ENCODE measurements at regions of chr12 and their contacts with region 1.

Region 1: GRCh38 chr12:65169320-65170208 is at the start of gene LEMD3:
- DNase-seq: peak; percentile 88 to 98 (median 94)
- ATAC-seq: peak; percentile 90
- H3K4me3 ChIP-seq: peak within 1 kb of the TSS; percentile 74
- H3K4me3 Mint-ChIP-seq: peak within 1 kb of the TSS; percentile 99
- H3K27ac ChIP-seq: peak within 1 kb of the TSS; percentile 83 to 88
- H3K27ac Mint-ChIP-seq: peak within 1 kb of the TSS; percentile 99
- H3K4me1 ChIP-seq: peaks cover 24% of the 10 kb centered on the region
- H3K4me1 Mint-ChIP-seq: peaks cover 24% of the 10 kb centered on the region
- H3K27me3 ChIP-seq: no peaks in the 10 kb centered on the region
- H3K27me3 Mint-ChIP-seq: peaks cover 7% of the 10 kb centered on the region
- CTCF ChIP-seq: no peak
- total RNA-seq, gene LEMD3: 67.1 to 68.8 TPM

Region 2: GRCh38 chr12:64222009-64222765 is 947.4 kb before region 1 on chr12 and contains the start of gene KICS2:
- CTCF ChIA-PET with region 1: no interaction called
- POLR2A ChIA-PET with region 1: interaction called, 6 read pairs
- intact Hi-C with region 1: loop called in 1 of 2 experiments (anchors 10 kb)
- DNase-seq: peak; percentile 79 to 97 (median 88)
- ATAC-seq: peak; percentile 85
- H3K4me3 ChIP-seq: peak within 1 kb of the TSS; percentile 78
- H3K4me3 Mint-ChIP-seq: peak within 1 kb of the TSS; percentile 97
- H3K27ac ChIP-seq: peak within 1 kb of the TSS; percentile 84 to 98
- H3K27ac Mint-ChIP-seq: peak within 1 kb of the TSS; percentile 95
- H3K4me1 ChIP-seq: peaks cover 13% of the 10 kb centered on the region
- H3K4me1 Mint-ChIP-seq: peaks cover 41% of the 10 kb centered on the region
- H3K27me3 ChIP-seq: no peaks in the 10 kb centered on the region
- H3K27me3 Mint-ChIP-seq: peaks cover 12% of the 10 kb centered on the region
- CTCF ChIP-seq: no peak
- total RNA-seq, gene KICS2: 13.6 to 14.0 TPM

Region 3: GRCh38 chr12:64759035-64759901 is 410.3 kb before region 1 on chr12 and contains the start of gene GNS:
- CTCF ChIA-PET with region 1: no interaction called
- POLR2A ChIA-PET with region 1: no interaction called
- intact Hi-C with region 1: loop called in 1 of 2 experiments (anchors 5 kb)
- DNase-seq: peak; percentile 81 to 95 (median 90)
- ATAC-seq: peak; percentile 87
- H3K4me3 ChIP-seq: peak within 1 kb of the TSS; percentile 62
- H3K4me3 Mint-ChIP-seq: peak within 1 kb of the TSS; percentile 99
- H3K27ac ChIP-seq: peak within 1 kb of the TSS; percentile 52 to 54
- H3K27ac Mint-ChIP-seq: peak within 1 kb of the TSS; percentile 85
- H3K4me1 ChIP-seq: peaks cover 23% of the 10 kb centered on the region
- H3K4me1 Mint-ChIP-seq: peaks cover 54% of the 10 kb centered on the region
- H3K27me3 ChIP-seq: no peaks in the 10 kb centered on the region
- H3K27me3 Mint-ChIP-seq: no peaks in the 10 kb centered on the region
- CTCF ChIP-seq: no peak
- total RNA-seq, gene GNS: 8.7 to 10.0 TPM

Region 4: GRCh38 chr12:65055859-65056258 is 113.7 kb before region 1 on chr12:
- CTCF ChIA-PET with region 1: no interaction called
- POLR2A ChIA-PET with region 1: no interaction called
- intact Hi-C with region 1: no loop called
- DNase-seq: no peak
- ATAC-seq: no peak
- H3K4me3 ChIP-seq: no peak overlapping the region
- H3K4me3 Mint-ChIP-seq: no peak overlapping the region
- H3K27ac ChIP-seq: no peak overlapping the region
- H3K27ac Mint-ChIP-seq: no peak overlapping the region
- H3K4me1 ChIP-seq: no peaks in the 10 kb centered on the region
- H3K4me1 Mint-ChIP-seq: no peaks in the 10 kb centered on the region
- H3K27me3 ChIP-seq: no peaks in the 10 kb centered on the region
- H3K27me3 Mint-ChIP-seq: peaks cover 13% of the 10 kb centered on the region
- CTCF ChIP-seq: no peak

Region 5: DNA sequence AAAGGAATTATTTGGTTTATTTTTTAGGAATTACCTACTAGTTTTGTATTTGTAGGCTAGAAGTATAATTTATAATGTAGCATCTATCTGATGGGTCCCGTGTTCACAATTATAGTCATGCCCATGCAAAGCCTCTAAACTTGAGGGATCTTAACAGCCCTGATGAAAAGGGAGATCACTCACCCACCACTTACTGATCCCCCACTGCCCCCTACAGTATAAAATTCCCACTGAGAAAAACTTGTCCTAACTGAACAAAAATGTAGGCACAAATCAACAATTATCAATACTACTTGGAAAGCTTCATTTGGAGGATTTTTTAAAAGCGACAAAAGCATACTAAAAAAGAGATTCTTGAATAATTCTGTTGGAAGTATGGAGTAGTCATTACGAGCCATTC is 69.4 kb before region 1 on chr12:
- CTCF ChIA-PET with region 1: no interaction called
- POLR2A ChIA-PET with region 1: no interaction called
- intact Hi-C with region 1: no loop called
- DNase-seq: no peak
- ATAC-seq: no peak
- H3K4me3 ChIP-seq: no peak overlapping the region
- H3K4me3 Mint-ChIP-seq: no peak overlapping the region
- H3K27ac ChIP-seq: no peak overlapping the region
- H3K27ac Mint-ChIP-seq: no peak overlapping the region
- H3K4me1 ChIP-seq: no peaks in the 10 kb centered on the region
- H3K4me1 Mint-ChIP-seq: no peaks in the 10 kb centered on the region
- H3K27me3 ChIP-seq: peaks cover 3 to 12% of the 10 kb centered on the region in 2 experiments
- H3K27me3 Mint-ChIP-seq: peaks cover 52% of the 10 kb centered on the region
- CTCF ChIP-seq: no peak

Region 6: GRCh38 chr12:65156366-65156841 is 13.2 kb before region 1 on chr12:
- CTCF ChIA-PET with region 1: interaction called, 3 read pairs
- POLR2A ChIA-PET with region 1: interaction called, 42 read pairs
- intact Hi-C with region 1: no loop called
- DNase-seq: peak in 3 of 14 experiments; percentile 17 to 53 (median 22)
- ATAC-seq: peak; percentile 51
- H3K4me3 ChIP-seq: no peak overlapping the region
- H3K4me3 Mint-ChIP-seq: no peak overlapping the region
- H3K27ac ChIP-seq: no peak overlapping the region
- H3K27ac Mint-ChIP-seq: no peak overlapping the region
- H3K4me1 ChIP-seq: peaks cover 11% of the 10 kb centered on the region
- H3K4me1 Mint-ChIP-seq: peaks cover 10% of the 10 kb centered on the region
- H3K27me3 ChIP-seq: peaks cover 1 to 8% of the 10 kb centered on the region in 2 experiments
- H3K27me3 Mint-ChIP-seq: peaks cover 22% of the 10 kb centered on the region
- CTCF ChIP-seq: no peak

Region 7: GRCh38 chr12:65195387-65196055 is 26.0 kb after region 1 on chr12:
- CTCF ChIA-PET with region 1: no interaction called
- POLR2A ChIA-PET with region 1: interaction called, 13 read pairs
- intact Hi-C with region 1: no loop called
- DNase-seq: no peak
- ATAC-seq: no peak
- H3K4me3 ChIP-seq: no peak overlapping the region
- H3K4me3 Mint-ChIP-seq: no peak overlapping the region
- H3K27ac ChIP-seq: no peak overlapping the region
- H3K27ac Mint-ChIP-seq: no peak overlapping the region
- H3K4me1 ChIP-seq: peaks cover 7% of the 10 kb centered on the region
- H3K4me1 Mint-ChIP-seq: peaks cover 76% of the 10 kb centered on the region
- H3K27me3 ChIP-seq: no peaks in the 10 kb centered on the region
- H3K27me3 Mint-ChIP-seq: no peaks in the 10 kb centered on the region
- CTCF ChIP-seq: no peak

Region 8: DNA sequence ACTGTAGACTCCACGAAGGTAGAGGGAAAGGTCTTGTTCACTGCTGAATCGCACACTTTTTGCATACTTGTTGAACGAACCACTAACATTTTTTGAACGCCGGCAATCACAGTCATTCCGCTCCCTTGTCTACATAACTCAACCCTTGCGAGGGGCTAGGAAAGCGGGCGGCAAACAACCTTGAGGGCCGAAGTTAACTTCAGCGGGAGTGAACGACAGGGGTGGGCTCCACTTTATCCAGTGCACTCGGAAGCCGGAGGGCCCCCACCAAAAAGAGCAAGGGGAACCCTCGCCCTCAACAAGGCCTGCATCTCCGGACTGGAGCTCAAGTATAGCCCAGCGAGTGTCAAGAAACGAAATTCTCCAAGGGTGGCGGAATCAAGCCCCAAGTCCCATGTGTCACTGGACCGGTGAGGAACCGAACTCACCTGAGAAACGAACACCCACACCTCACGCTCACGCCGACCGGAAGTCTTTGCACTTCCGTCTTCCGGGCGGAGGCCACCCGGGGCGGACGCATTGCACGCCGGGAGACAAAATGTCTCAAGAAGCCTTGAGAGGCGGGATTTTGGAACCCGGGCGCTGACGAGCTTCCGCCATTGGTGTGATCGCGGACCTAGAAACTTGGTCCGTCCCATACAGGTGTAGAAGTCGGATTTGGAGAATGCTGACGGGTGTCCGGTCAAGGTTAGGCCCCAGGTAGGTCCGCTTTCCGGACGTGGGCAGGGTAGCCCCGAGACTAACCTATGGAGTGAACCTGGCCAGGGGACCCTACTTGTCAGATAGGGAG is 960.9 kb after region 1 on chr12 and contains the start of gene LLPH:
- CTCF ChIA-PET with region 1: no interaction called
- POLR2A ChIA-PET with region 1: interaction called, 9 read pairs
- intact Hi-C with region 1: loop called in 1 of 2 experiments (anchors 5 kb)
- DNase-seq: peak; percentile 78 to 94 (median 84)
- ATAC-seq: peak; percentile 90
- H3K4me3 ChIP-seq: peak within 1 kb of the TSS; percentile 96
- H3K4me3 Mint-ChIP-seq: peak within 1 kb of the TSS; percentile 95
- H3K27ac ChIP-seq: peak within 1 kb of the TSS; percentile 77 to 89
- H3K27ac Mint-ChIP-seq: peak within 1 kb of the TSS; percentile 96
- H3K4me1 ChIP-seq: peaks cover 13% of the 10 kb centered on the region
- H3K4me1 Mint-ChIP-seq: peaks cover 71% of the 10 kb centered on the region
- H3K27me3 ChIP-seq: no peaks in the 10 kb centered on the region
- H3K27me3 Mint-ChIP-seq: no peaks in the 10 kb centered on the region
- CTCF ChIP-seq: no peak
- total RNA-seq, gene LLPH: 27.3 to 31.0 TPM

Region 9: DNA sequence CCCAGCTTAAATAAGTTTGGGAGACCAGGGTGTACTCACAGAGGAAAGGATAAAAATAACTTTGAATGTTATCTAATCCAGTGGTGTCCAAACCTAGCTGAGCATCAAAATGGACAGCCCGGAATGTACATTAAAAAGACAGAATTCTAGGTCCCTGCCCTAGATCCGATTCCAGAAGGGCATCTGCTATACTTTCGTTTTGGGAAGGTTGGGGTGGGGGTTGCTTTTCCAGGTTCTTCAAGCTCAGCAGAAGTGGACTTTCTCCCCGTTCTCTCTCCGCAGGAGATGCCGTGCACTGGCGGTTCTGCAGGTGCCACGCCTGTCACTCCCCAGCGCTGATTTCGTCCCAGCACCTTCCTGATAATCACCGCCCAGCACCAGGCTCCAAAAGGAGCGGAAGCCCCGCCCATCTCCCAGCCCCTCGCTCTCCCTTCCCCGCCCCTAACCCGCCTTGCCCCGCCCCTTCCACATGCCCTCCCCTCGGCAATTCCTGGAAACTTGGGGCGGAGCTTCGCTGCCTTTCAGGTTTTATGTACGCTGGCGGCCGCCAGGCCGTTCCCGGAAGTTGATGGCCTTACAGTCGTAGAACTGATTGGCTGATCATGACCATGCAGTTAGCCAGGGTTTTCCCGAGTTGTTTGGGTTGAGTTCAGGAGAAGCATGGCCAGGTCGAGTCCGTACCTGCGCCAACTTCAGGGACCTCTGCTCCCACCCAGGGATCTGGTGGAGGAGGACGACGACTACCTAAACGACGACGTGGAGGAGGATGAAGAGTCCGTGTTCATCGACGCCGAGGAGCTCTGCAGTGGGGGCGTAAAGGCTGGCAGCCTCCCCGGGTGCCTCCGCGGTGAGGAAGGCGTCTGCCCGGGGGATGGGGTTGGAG is 1132.6 kb after region 1 on chr12 and contains the start of gene HELB:
- CTCF ChIA-PET with region 1: no interaction called
- POLR2A ChIA-PET with region 1: no interaction called
- intact Hi-C with region 1: loop called in 1 of 2 experiments (anchors 10 kb)
- DNase-seq: peak; percentile 89 to 100 (median 96)
- ATAC-seq: peak; percentile 76
- H3K4me3 ChIP-seq: peak within 1 kb of the TSS; percentile 87
- H3K4me3 Mint-ChIP-seq: peak within 1 kb of the TSS; percentile 97
- H3K27ac ChIP-seq: peak within 1 kb of the TSS; percentile 86 to 89
- H3K27ac Mint-ChIP-seq: peak within 1 kb of the TSS; percentile 87
- H3K4me1 ChIP-seq: peaks cover 17% of the 10 kb centered on the region
- H3K4me1 Mint-ChIP-seq: peaks cover 59% of the 10 kb centered on the region
- H3K27me3 ChIP-seq: no peaks in the 10 kb centered on the region
- H3K27me3 Mint-ChIP-seq: no peaks in the 10 kb centered on the region
- CTCF ChIP-seq: no peak
- total RNA-seq, gene HELB: 33.8 to 35.8 TPM